ENCODE measurements at regions of chr1 and their contacts with region 1.

Region 1: GRCh38 chr1:8987881-8988617 is 38.2 kb downstream of the SLC2A7 start:
- DNase-seq: no peak
- H3K4me3 ChIP-seq: no peak overlapping the region
- H3K27ac ChIP-seq: no peak overlapping the region
- H3K4me1 ChIP-seq: peaks cover 9% of the 10 kb centered on the region
- H3K27me3 ChIP-seq: no peaks in the 10 kb centered on the region
- CTCF ChIP-seq: peak; percentile 86 to 93

Region 2: GRCh38 chr1:8858888-8859706 is 129.0 kb before region 1 on chr1:
- CTCF ChIA-PET with region 1: no interaction called
- dilution Hi-C with region 1: no loop called
- in situ Hi-C with region 1: loop called in 1 of 2 experiments (anchors 25 kb)
- intact Hi-C with region 1: loop called (anchors 1 kb)
- DNase-seq: no peak
- H3K4me3 ChIP-seq: no peak overlapping the region
- H3K27ac ChIP-seq: no peak overlapping the region
- H3K4me1 ChIP-seq: peaks cover 21% of the 10 kb centered on the region
- H3K27me3 ChIP-seq: no peaks in the 10 kb centered on the region
- CTCF ChIP-seq: peak; percentile 64 to 65

Region 3: GRCh38 chr1:8873506-8874229 is 114.4 kb before region 1 on chr1:
- CTCF ChIA-PET with region 1: interaction called, 4 read pairs
- dilution Hi-C with region 1: no loop called
- in situ Hi-C with region 1: loop called in 1 of 2 experiments (anchors 25 kb)
- intact Hi-C with region 1: loop called (anchors 1 kb)
- DNase-seq: peak; percentile 99
- H3K4me3 ChIP-seq: peak overlapping the region in 2 of 3 experiments; percentile 4 to 35
- H3K27ac ChIP-seq: peak overlapping the region; percentile 93
- H3K4me1 ChIP-seq: peaks cover 61% of the 10 kb centered on the region
- H3K27me3 ChIP-seq: no peaks in the 10 kb centered on the region
- CTCF ChIP-seq: no peak

Region 4: DNA sequence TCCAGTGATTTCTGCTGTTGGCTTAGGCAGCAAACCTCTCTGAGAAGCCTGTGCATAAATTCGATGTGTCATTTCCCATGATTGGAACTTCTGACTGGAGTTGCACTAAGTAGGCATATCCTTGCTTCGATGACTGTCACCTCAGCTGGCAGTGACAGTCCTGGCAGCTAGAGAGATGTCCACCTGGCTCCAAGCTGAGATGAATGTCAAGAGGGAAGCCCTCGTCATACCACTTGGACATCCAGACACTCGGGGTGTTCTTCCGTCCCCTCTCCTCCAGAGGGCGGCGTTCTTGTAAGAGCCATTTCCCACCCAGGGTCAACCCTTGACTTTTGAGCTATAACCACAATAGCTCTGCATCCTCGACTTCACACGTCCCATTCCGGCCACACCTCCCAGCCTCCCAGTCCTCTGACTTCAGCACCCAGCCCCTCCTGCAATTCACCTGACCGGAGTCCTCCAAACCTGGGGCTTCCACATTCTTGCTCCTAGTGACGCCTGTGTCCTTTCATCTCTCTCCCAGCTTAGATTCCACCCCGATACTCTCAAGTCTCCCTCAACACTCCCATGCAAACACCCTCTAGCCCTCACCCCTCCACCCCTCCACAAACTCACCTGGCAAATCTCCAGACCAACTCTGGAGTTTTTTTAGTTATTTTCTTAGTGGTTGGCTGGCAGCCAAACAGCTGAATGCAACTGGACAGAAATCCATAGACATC is 25.1 kb before region 1 on chr1:
- CTCF ChIA-PET with region 1: no interaction called
- dilution Hi-C with region 1: no loop called
- in situ Hi-C with region 1: no loop called
- intact Hi-C with region 1: loop called (anchors 1 kb)
- DNase-seq: no peak
- H3K4me3 ChIP-seq: no peak overlapping the region
- H3K27ac ChIP-seq: no peak overlapping the region
- H3K4me1 ChIP-seq: no peaks in the 10 kb centered on the region
- H3K27me3 ChIP-seq: no peaks in the 10 kb centered on the region
- CTCF ChIP-seq: peak; percentile 49 to 64

Region 5: DNA sequence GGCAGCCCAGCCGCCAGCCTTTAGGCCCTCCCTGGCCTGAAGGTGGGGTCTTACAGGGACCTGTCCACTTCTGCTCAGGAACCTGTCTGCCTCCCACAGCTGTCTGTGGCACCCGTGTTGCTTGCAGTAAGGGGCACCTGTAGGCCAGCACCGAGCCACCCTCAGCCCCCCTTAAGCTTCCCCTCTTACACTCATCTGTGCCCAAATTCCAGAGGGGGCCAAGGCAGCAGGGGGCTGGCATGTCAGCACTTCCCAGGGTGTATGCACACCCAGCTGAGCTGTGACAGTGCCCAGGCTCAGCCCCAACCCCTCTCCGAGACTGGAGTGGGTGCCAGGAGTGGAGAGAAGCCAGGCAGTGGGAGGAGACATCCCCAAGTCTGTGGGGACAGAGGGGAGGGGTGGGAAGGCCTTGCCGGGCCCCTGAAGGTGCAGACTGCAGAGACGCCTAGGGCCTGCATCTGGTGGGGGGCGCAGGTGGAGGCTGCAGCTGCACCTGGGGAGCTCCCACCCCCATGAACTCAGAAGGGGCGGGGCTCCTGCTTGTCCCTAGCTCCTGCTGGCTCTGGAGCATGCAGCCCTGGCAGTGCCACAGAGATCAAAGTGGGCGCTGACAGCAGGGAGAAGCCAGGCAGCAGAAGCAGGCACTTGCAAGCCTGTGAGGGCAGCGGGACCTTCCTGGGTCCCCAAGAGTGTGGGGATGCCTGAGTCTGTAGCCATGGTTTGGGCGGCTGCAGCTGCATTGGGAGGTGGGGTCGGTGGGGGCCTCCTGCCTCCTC is 43.6 kb after region 1 on chr1:
- CTCF ChIA-PET with region 1: no interaction called
- dilution Hi-C with region 1: loop called (anchors 5 kb)
- in situ Hi-C with region 1: no loop called
- intact Hi-C with region 1: no loop called
- DNase-seq: no peak
- H3K4me3 ChIP-seq: no peak overlapping the region
- H3K27ac ChIP-seq: no peak overlapping the region
- H3K4me1 ChIP-seq: no peaks in the 10 kb centered on the region
- H3K27me3 ChIP-seq: no peaks in the 10 kb centered on the region
- CTCF ChIP-seq: no peak

Region 6: DNA sequence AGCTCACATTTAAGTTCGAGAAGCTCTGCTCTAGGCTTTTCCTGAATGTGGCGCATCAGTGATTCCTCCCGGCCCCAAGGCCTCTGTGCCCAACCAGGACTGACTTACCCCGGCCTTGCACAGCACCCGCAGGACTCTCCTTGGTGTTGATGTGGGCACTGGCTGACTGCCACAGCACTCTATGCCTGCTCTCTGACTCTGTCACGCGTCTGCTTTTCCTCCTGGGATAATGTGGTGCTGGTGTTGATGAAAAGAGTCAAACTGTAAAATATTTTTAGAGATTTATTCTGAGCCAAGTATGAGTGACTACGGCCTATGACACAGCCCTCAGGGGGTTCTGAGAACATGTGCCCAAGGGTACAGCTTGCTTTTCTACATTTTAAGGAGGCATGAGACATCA is 96.9 kb after region 1 on chr1:
- CTCF ChIA-PET with region 1: no interaction called
- dilution Hi-C with region 1: loop called (anchors 5 kb)
- in situ Hi-C with region 1: no loop called
- intact Hi-C with region 1: no loop called
- DNase-seq: peak; percentile 40
- H3K4me3 ChIP-seq: no peak overlapping the region
- H3K27ac ChIP-seq: no peak overlapping the region
- H3K4me1 ChIP-seq: peaks cover 34% of the 10 kb centered on the region
- H3K27me3 ChIP-seq: no peaks in the 10 kb centered on the region
- CTCF ChIP-seq: no peak

Region 7: GRCh38 chr1:9110669-9111356 is 122.8 kb after region 1 on chr1:
- CTCF ChIA-PET with region 1: no interaction called
- dilution Hi-C with region 1: no loop called
- in situ Hi-C with region 1: no loop called
- intact Hi-C with region 1: no loop called
- DNase-seq: peak; percentile 97
- H3K4me3 ChIP-seq: no peak overlapping the region
- H3K27ac ChIP-seq: no peak overlapping the region
- H3K4me1 ChIP-seq: peaks cover 13% of the 10 kb centered on the region
- H3K27me3 ChIP-seq: no peaks in the 10 kb centered on the region
- CTCF ChIP-seq: peak; percentile 87 to 93

Measured in mammary epithelial cell (primary cell).